ENCODE measurements at regions of chr22 and their contacts with region 1.

Region 1: GRCh38 chr22:28442264-28442710 is 237.4 kb downstream of the TTC28 start:
- DNase-seq: peak; percentile 81 to 91 (median 86)
- ATAC-seq: peak; percentile 84 to 95 (median 94)
- H3K4me3 ChIP-seq: peak overlapping the region; percentile 41 to 76 (median 66)
- H3K27ac ChIP-seq: peak overlapping the region; percentile 53 to 89 (median 80)
- H3K4me1 ChIP-seq: peaks cover 0 to 39% (median 17%) of the 10 kb centered on the region in 12 donors
- H3K27me3 ChIP-seq: no peaks in the 10 kb centered on the region
- CTCF ChIP-seq: peak; percentile 65 to 84 (median 78)
- POLR2A ChIP-seq: no peak

Region 2: GRCh38 chr22:28019881-28020871 is 422.1 kb before region 1 on chr22:
- intact Hi-C with region 1: loop called in 6 of 10 experiments (anchors 5 to 10 kb)
- DNase-seq: peak; percentile 66 to 86 (median 73)
- ATAC-seq: peak; percentile 56 to 73 (median 70)
- H3K4me3 ChIP-seq: no peak overlapping the region
- H3K27ac ChIP-seq: peak overlapping the region in 2 of 12 donors; percentile 26 to 48
- H3K4me1 ChIP-seq: peaks cover 0 to 49% (median 19%) of the 10 kb centered on the region in 12 donors
- H3K27me3 ChIP-seq: no peaks in the 10 kb centered on the region
- CTCF ChIP-seq: peak; percentile 91 to 99 (median 96)
- POLR2A ChIP-seq: no peak

Region 3: DNA sequence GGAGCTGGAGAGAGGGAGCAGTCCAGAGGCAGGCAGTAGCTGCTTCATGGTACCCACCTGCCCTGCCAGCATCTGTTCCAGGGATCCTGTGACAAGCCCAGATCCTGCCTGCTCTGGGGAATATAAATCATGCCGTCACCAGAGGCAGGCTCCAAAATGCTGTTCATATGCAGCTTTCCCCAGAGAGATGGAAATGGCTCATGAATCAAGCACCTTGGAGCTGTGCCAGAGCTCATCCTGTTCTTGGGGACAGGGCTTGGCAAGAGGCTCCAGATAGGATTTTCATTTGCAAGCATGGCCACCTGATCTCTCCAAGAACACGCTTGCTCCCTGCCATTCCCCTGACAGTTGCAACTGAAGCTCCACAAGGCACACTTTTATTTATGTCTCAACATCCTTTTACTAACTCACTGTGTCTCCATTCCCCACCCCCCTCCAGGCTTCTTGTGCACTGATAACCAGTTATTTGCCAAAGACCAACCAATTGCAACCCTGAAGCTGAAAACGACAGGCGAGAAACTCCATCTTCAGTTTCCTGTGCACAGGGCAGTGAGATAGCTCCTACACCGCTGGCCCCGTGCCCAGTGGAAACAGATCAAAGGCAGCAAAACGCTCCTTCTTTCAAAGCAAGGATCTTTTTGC is 407.4 kb before region 1 on chr22:
- intact Hi-C with region 1: loop called in 1 of 10 experiments (anchors 5 kb)
- DNase-seq: peak; percentile 83 to 94 (median 88)
- ATAC-seq: peak; percentile 90 to 96 (median 94)
- H3K4me3 ChIP-seq: no peak overlapping the region
- H3K27ac ChIP-seq: peak overlapping the region; percentile 37 to 84 (median 70)
- H3K4me1 ChIP-seq: peaks cover 8 to 42% (median 25%) of the 10 kb centered on the region in 12 donors
- H3K27me3 ChIP-seq: no peaks in the 10 kb centered on the region
- CTCF ChIP-seq: no peak
- POLR2A ChIP-seq: no peak

Region 4: DNA sequence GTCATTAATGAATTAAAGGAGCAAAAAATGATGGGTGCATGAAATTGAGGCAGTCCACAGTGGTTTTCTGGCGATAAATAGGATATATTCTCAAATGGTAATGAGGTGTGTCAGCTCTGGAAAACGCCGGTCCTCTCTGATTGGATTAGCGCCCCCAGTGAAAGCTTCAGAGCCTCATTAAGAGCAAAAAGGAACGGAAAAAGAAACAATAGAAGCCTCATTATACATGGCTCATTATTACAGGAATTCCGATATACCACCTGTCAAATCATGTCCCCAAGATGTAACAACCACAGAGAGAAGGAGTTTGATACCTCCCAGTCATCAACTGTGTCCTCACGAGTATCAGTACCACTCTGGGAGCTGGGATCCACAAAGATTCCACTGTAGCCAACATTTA is 347.5 kb before region 1 on chr22:
- intact Hi-C with region 1: loop called in 1 of 10 experiments (anchors 10 kb)
- DNase-seq: no peak
- ATAC-seq: no peak
- H3K4me3 ChIP-seq: no peak overlapping the region
- H3K27ac ChIP-seq: no peak overlapping the region
- H3K4me1 ChIP-seq: no peaks in the 10 kb centered on the region
- H3K27me3 ChIP-seq: no peaks in the 10 kb centered on the region
- CTCF ChIP-seq: no peak
- POLR2A ChIP-seq: no peak

Region 5: GRCh38 chr22:28247667-28248363 is 194.5 kb before region 1 on chr22:
- intact Hi-C with region 1: loop called in 2 of 10 experiments (anchors 5 to 10 kb)
- DNase-seq: no peak
- ATAC-seq: peak in 1 of 4 donors; percentile 52
- H3K4me3 ChIP-seq: no peak overlapping the region
- H3K27ac ChIP-seq: peak overlapping the region in 2 of 12 donors; percentile 63 to 65
- H3K4me1 ChIP-seq: peaks cover 0 to 65% (median 37%) of the 10 kb centered on the region in 12 donors
- H3K27me3 ChIP-seq: no peaks in the 10 kb centered on the region
- CTCF ChIP-seq: no peak
- POLR2A ChIP-seq: no peak

Region 6: GRCh38 chr22:28297504-28297903 is 144.8 kb before region 1 on chr22:
- intact Hi-C with region 1: loop called in 2 of 10 experiments (anchors 2 to 10 kb)
- DNase-seq: no peak
- ATAC-seq: no peak
- H3K4me3 ChIP-seq: no peak overlapping the region
- H3K27ac ChIP-seq: peak overlapping the region in 1 of 12 donors; percentile 25
- H3K4me1 ChIP-seq: peaks cover 0 to 36% (median 21%) of the 10 kb centered on the region in 12 donors
- H3K27me3 ChIP-seq: no peaks in the 10 kb centered on the region
- CTCF ChIP-seq: no peak
- POLR2A ChIP-seq: no peak

Region 7: DNA sequence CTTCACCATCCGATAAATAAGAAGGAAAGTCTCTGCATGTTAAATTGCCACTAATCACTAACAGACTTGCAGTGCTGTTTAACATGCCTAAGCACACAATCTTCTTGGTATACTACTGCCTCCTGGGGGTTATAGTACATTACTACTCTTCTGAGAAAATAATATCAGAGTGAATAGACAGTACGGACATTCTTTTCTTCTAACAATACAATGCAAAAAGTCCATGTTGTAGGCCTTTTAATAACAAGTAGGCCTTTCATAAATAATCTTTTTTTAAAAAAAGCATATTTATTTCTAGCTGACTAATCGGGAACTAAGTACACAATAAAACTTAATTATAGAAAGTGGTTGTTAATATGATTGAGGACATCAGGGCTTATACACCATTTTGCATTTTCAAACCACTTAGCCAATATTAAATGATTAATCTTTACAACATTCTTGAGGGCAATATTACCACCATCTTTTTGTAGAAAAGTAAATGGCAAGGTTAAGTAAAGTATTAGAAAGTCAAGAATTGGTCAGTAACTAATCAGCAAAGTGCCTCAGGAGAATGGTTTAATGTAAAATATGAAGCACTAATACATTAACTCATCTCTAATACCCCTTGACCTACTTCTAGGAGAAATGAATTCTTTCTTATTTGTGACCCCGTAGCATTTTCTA is 152.6 kb after region 1 on chr22:
- intact Hi-C with region 1: loop called in 7 of 10 experiments (anchors 5 to 10 kb)
- DNase-seq: no peak
- ATAC-seq: peak; percentile 79 to 93 (median 86)
- H3K4me3 ChIP-seq: no peak overlapping the region
- H3K27ac ChIP-seq: no peak overlapping the region
- H3K4me1 ChIP-seq: peaks cover 0 to 4% (median 0%) of the 10 kb centered on the region in 12 donors
- H3K27me3 ChIP-seq: no peaks in the 10 kb centered on the region
- CTCF ChIP-seq: peak; percentile 64 to 93 (median 78)
- POLR2A ChIP-seq: no peak